ENCODE measurements at regions of chr13 and their contacts with region 1.

Region 1: DNA sequence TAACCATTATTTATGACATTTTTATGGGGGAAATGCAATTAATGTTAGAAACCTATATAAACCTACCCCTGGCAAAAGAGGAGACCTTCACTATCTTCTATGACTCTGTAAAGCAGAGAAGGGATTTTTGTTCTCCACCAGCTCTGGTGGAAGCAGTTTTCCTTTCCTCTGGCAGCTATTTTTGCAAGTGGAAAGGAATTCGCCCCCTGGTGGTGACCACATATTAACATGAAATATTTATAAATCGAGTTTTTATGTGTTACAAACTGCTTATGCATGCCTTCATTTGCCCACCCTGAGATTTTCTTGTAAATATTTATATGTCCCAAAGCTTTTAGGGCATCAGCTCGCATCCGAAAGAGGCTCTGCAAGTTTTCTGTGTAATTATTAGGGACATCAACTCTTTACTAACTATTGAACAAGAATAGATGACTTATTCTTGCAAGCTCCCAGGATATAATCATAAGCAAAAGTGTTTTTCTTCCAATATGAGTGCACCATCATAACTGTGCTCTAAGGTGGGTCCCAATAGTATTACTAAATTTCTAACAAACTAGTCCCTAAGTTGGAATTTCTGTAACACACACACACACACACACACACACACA is 62.4 kb downstream of the SERTM1 start:
- DNase-seq: peak in 1 of 2 experiments; percentile 58
- H3K4me3 ChIP-seq: no peak overlapping the region
- H3K4me3 Mint-ChIP-seq: no peak overlapping the region
- H3K27ac Mint-ChIP-seq: no peak overlapping the region
- H3K4me1 ChIP-seq: no peaks in the 10 kb centered on the region
- H3K4me1 Mint-ChIP-seq: no peaks in the 10 kb centered on the region
- H3K27me3 ChIP-seq: no peaks in the 10 kb centered on the region
- H3K27me3 Mint-ChIP-seq: peaks cover 10% of the 10 kb centered on the region
- CTCF ChIP-seq: peak; percentile 65 to 83

Region 2: DNA sequence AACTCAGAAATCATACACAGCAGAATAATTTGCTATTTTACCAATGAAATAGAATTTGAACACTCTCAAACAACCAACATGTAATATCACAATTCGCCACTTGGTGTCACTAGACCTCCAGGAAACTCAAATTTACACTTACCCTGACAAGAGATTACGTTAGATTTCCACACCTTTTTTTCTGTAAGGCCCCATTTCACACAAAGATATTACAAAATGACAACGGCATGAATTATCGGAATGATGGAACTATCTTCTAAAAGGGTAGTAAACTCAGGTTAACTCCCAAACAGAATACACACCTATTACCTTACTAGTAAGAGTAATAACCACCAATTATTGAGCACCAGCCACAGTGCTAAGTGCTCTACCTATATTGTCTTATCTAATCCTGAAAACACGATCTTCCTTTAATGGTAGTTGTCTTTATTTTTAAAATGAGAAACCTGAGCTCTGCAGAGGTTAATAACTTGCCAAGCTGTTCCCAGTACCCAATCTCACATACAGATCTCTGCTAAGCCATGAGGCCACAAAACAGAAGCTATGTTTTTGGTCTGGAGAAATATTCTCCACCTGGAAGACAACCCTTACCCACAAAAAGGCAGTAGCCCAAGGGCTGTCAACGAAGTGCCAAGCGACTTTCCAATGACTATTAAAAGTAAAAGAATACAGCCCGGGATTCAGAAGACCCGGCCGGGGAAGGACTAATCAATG is 757.5 kb before region 1 on chr13:
- CTCF ChIA-PET with region 1: interaction called, 5 read pairs
- POLR2A ChIA-PET with region 1: no interaction called
- intact Hi-C with region 1: loop called (anchors 2 kb)
- DNase-seq: peak in 1 of 2 experiments; percentile 51
- H3K4me3 ChIP-seq: no peak overlapping the region
- H3K4me3 Mint-ChIP-seq: no peak overlapping the region
- H3K27ac Mint-ChIP-seq: no peak overlapping the region
- H3K4me1 ChIP-seq: no peaks in the 10 kb centered on the region
- H3K4me1 Mint-ChIP-seq: no peaks in the 10 kb centered on the region
- H3K27me3 ChIP-seq: no peaks in the 10 kb centered on the region
- H3K27me3 Mint-ChIP-seq: peaks cover 3% of the 10 kb centered on the region
- CTCF ChIP-seq: peak; percentile 54 to 84

Region 3: DNA sequence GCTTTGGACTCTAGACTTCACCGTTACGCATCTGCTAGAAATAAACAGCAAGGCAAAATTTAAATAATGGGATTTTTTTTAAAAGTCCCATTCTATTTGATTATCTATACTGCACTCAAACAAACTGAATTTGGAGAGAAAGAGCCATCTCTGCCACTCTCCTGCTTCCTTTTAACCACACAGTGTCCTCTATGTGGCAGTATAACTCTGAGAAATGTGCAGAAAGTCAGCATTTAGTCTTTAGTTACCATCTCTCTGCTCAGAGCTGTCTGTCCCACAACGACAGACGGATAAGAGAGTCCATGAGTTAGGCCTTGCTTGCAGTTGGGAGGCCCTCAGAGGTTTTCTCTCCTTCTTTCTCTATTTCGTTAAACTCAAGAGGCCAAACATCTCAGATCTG is 282.7 kb before region 1 on chr13:
- CTCF ChIA-PET with region 1: interaction called, 16 read pairs
- POLR2A ChIA-PET with region 1: no interaction called
- intact Hi-C with region 1: loop called (anchors 1 kb)
- DNase-seq: peak in 1 of 2 experiments; percentile 9
- H3K4me3 ChIP-seq: no peak overlapping the region
- H3K4me3 Mint-ChIP-seq: no peak overlapping the region
- H3K27ac Mint-ChIP-seq: no peak overlapping the region
- H3K4me1 ChIP-seq: no peaks in the 10 kb centered on the region
- H3K4me1 Mint-ChIP-seq: no peaks in the 10 kb centered on the region
- H3K27me3 ChIP-seq: no peaks in the 10 kb centered on the region
- H3K27me3 Mint-ChIP-seq: peaks cover 13% of the 10 kb centered on the region
- CTCF ChIP-seq: peak in 1 of 2 experiments; percentile 33